Left cardiac atrium (tissue), 4 donors: ENCODE measurements at regions of chr17 and their contacts with region 1.

Region 1: GRCh38 chr17:47895856-47896671 is at the start of gene SP2:
- DNase-seq: peak; percentile 98
- ATAC-seq: peak; percentile 94 to 97
- total RNA-seq, gene SP2: 12.6 to 14.1 TPM

Region 2: DNA sequence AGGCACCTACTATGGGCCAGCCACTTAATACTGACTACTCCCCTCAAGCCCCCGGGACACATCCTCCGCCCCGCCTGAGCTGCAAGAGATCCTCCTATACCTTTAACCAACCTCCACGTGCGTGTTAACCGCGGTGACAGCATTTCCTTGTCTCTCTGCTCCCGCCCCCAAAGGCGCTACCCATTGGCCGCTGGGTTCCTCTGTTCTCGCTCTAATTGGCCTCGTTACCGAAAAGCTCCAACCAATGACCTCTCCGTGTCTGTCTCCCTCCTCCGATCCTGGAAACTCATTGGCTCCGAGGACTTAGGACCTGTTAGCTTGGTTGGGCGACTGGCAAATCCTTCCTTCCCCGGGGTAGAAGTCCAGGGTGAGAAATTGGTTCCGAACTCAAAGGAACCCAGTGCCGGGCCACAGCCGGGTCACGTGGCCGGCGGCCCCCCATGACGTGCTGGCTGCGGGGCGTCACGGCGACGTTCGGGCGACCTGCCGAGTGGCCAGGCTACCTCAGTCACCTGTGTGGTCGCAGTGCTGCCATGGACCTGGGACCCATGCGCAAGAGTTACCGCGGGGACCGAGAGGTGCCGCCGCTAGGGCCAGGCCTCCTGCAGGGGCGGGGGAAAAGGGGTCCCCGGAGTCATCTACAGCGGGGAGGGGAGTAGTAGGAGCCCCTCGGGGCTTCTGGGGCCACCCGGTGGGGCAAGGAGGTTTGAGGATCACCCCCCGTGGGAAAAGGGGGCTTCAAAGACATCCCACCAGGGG is 45.4 kb after region 1 on chr17 and contains the start of gene PNPO:
- intact Hi-C with region 1: loop called (anchors 5 to 10 kb)
- DNase-seq: peak; percentile 96
- ATAC-seq: peak; percentile 98
- total RNA-seq, gene PNPO: 23.4 to 25.4 TPM

Region 3: DNA sequence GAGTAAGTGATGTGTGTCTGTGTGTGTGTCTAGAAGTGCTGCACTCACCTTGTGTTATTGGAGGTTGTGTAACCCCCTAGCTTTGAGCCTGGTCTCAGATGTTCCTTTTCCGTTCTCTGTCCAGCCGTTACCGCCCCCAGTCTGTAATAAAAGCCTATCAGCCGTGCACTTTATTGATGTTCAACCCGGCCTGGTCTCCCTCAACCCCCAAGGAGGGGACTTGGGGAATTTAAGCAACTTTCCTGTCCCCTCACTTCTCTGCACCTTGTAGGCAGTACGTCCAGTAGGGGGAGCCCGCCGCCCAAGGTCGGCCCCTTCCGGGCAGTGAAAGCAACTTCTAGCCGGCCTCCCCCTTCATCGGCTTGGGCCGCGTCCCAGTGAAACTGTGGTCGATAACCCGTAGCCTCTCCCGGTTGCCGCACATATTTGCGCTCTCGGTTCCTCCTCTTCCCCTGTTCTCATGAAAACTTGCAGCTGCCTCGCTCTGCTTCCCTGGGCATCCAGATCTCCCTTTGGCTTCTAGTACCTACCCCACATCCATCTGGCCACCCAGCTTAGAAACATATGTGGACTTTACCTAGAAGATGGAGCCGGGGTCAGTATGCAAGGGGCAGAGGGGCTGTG is 53.2 kb after region 1 on chr17:
- intact Hi-C with region 1: loop called (anchors 5 to 10 kb)
- DNase-seq: peak; percentile 93
- ATAC-seq: peak; percentile 83 to 92

Region 4: GRCh38 chr17:47970704-47971463 is 74.8 kb after region 1 on chr17 and contains the start of gene CDK5RAP3:
- intact Hi-C with region 1: loop called in 1 of 2 experiments (anchors 2 kb)
- DNase-seq: peak; percentile 100
- ATAC-seq: peak; percentile 99 to 100
- total RNA-seq, gene CDK5RAP3: 62.6 to 66.3 TPM